Endothelial cell of umbilical vein (primary cell): ENCODE measurements at regions of chr19 and their contacts with region 1.

Region 1: DNA sequence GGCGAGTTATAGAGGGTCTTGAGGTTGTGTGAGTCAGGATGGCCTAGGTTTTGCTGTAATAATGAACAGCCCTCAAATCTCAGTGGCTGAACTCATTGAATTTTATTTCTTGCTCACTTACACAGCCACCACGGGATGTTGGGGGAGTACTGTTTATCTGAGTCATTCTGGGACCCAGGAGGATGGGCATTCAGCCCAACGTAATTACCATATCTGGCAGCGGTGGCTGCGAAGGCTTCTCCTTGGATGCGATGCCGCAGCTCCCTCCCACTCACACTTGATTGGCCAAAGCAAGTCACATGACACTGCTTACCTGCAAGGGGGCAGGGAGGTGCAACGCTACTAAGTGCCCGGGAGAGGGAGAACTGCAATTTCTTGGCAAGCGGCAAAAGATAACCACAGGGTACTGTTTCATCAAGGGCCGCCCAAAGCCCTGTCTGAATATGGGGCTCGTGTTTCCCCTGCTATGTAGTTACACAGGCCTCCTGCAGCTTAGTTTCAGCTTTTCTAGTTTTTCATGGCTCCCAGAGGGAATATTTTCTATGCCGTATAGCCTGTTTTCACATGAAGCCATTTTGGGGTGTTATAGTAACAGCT is 19.9 kb downstream of the ZSWIM9 start:
- DNase-seq: no peak
- H3K4me3 ChIP-seq: no peak overlapping the region
- H3K27ac ChIP-seq: no peak overlapping the region
- H3K4me1 ChIP-seq: no peaks in the 10 kb centered on the region
- H3K27me3 ChIP-seq: no peaks in the 10 kb centered on the region
- CTCF ChIP-seq: no peak
- POLR2A ChIP-seq: no peak

Region 2: DNA sequence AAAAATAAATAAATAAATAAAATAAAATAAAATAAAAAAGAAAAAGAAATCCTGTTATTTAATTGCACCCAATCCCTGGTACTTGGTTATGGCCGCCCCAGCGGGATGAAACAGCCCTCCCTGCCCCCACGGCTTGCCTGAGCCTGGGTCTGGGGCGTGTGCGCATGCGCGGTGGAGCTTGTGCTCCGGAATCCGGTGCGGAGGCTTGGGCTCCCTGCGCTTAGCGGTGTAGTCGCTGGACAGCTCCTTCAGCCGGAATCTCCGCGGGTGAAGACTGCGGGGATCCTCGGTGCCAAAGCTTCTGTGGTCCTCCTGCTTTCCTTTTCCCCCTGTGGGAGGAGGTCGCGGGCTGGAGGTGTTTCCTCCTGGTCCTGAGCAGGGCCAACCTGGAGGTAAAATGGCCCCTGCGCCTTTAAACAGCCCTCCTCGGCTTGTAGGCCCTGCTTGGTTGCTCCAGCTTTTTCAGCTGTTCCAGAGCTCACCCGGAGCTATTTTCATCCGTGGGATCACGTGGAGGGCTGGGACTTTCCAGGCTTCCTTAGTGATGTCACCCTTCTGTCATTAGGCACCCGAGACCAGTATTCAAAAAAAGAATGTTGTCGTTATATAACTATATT is 79.9 kb before region 1 on chr19 and contains the start of gene PLA2G4C:
- CTCF ChIA-PET with region 1: interaction called, 11 read pairs
- POLR2A ChIA-PET with region 1: no interaction called
- dilution Hi-C with region 1: no loop called
- intact Hi-C with region 1: loop called (anchors 1 kb)
- DNase-seq: peak; percentile 94
- H3K4me3 ChIP-seq: peak within 1 kb of the TSS in 2 of 3 experiments; percentile 25 to 71
- H3K27ac ChIP-seq: peak within 1 kb of the TSS; percentile 96
- H3K4me1 ChIP-seq: peaks cover 32% of the 10 kb centered on the region
- H3K27me3 ChIP-seq: no peaks in the 10 kb centered on the region
- CTCF ChIP-seq: no peak
- POLR2A ChIP-seq: peak; percentile 60
- total RNA-seq, gene PLA2G4C: 32.6 and 63.4 TPM in 2 replicates

Region 3: GRCh38 chr19:48152551-48152950 is 37.8 kb before region 1 on chr19:
- CTCF ChIA-PET with region 1: interaction called, 10 read pairs
- POLR2A ChIA-PET with region 1: no interaction called
- dilution Hi-C with region 1: no loop called
- intact Hi-C with region 1: no loop called
- DNase-seq: peak; percentile 98
- H3K4me3 ChIP-seq: no peak overlapping the region
- H3K27ac ChIP-seq: peak overlapping the region; percentile 94
- H3K4me1 ChIP-seq: peaks cover 15% of the 10 kb centered on the region
- H3K27me3 ChIP-seq: no peaks in the 10 kb centered on the region
- CTCF ChIP-seq: peak; percentile 65 to 67
- POLR2A ChIP-seq: peak; percentile 32